Spleen (tissue), 13 donors: ENCODE measurements at regions of chr1 and their contacts with region 1.

Region 1: DNA sequence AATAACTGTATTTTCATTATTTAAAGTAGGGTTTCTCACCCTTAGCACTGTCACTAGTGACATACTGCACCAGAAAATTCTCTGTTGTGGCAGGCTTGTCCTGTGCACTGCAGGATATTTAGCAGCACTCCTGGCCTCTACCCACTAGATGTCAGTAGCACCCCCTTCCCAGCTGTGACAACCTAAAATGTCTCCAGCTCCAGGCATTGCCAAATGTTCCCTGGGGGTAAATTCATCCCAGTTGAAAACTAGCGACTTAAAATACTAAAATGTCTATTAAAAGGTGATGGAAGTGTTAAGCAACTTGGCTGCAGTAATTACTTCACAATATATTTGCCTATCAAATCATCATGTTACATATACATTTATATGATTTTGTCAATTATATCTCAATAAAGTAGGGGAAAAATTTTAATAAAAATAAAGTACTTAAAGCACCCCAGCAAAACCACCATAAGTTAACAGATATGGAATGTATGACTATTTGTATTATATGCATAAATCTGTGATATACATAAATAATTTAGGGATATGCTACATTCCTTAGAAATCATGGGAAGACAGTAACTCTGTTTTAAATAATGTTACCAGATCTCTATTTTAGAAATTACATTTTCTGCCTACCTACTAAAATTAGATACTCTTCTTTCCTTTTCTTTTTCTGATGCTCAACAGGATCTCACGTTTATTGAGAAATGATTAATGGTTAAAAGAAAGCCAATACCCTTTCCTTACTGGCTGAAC is 74.6 kb downstream of the ARID4B start:
- DNase-seq: no peak
- H3K4me3 ChIP-seq: no peak overlapping the region
- H3K27ac ChIP-seq: no peak overlapping the region
- H3K4me1 ChIP-seq: peaks cover 0 to 50% (median 21%) of the 10 kb centered on the region in 6 donors
- H3K27me3 ChIP-seq: no peaks in the 10 kb centered on the region
- CTCF ChIP-seq: peak; percentile 29 to 81 (median 71)
- POLR2A ChIP-seq: no peak

Region 2: GRCh38 chr1:235286667-235287066 is 33.3 kb after region 1 on chr1:
- intact Hi-C with region 1: no loop called
- DNase-seq: no peak
- H3K4me3 ChIP-seq: no peak overlapping the region
- H3K27ac ChIP-seq: no peak overlapping the region
- H3K4me1 ChIP-seq: peaks cover 10 to 99% (median 78%) of the 10 kb centered on the region in 6 donors
- H3K27me3 ChIP-seq: no peaks in the 10 kb centered on the region
- CTCF ChIP-seq: no peak
- POLR2A ChIP-seq: no peak

Region 3: GRCh38 chr1:235328357-235329138 is 75.2 kb after region 1 on chr1 and contains the start of gene GGPS1:
- intact Hi-C with region 1: loop called (anchors 10 kb)
- DNase-seq: peak; percentile 98
- H3K4me3 ChIP-seq: peak within 1 kb of the TSS; percentile 62 to 97 (median 90)
- H3K27ac ChIP-seq: peak within 1 kb of the TSS; percentile 91 to 100 (median 98)
- H3K4me1 ChIP-seq: peaks cover 51 to 78% (median 72%) of the 10 kb centered on the region in 6 donors
- H3K27me3 ChIP-seq: no peaks in the 10 kb centered on the region
- CTCF ChIP-seq: peak in 6 of 11 experiments; percentile 7 to 44 (median 28)
- POLR2A ChIP-seq: peak; percentile 58 to 69 (median 66)
- total RNA-seq, gene GGPS1: 23.6 to 34.9 (median 25.9) TPM

Region 4: DNA sequence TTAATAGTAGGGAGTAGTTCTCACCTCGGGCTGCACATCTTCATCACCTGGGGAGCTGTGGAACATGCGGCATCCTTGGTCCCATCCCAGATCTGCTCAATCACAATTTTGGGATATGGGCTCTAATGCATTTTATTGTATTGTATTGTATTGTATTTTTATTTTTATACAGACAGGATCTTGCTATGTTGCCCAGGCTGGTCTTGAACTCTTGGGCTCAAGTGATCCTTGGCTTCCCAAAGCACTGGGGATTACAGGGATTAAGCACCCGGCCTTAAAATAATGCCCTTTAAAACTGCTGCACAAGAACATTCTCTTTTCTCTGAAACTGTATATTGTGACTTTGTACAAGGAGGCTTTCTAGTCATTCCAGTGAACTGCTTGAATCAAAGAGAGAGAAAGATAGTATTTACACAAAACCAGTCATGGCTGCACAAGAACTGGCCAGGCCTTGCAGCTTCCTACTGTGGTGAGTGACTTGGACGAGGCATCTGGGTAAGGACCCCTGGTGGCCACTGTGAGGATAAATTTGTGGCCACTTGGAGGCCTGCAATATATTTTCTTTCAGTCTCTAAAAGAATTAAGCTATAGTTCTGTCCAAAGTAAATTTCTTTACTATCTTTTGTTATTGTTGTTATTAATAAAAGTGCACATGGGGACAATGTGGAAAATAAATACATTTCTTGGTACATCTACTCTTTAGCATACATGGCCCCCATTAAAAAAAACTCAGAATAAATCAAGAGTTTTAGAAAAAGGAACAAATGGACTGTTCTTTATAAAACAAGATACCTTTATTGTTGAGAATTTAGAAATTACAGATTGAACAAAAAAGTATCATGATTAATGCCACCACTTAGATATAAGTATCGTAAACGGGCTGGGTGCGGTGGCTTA is 161.9 kb after region 1 on chr1:
- intact Hi-C with region 1: loop called (anchors 2 kb)
- DNase-seq: peak; percentile 80
- H3K4me3 ChIP-seq: no peak overlapping the region
- H3K27ac ChIP-seq: no peak overlapping the region
- H3K4me1 ChIP-seq: peaks cover 0 to 30% (median 6%) of the 10 kb centered on the region in 6 donors
- H3K27me3 ChIP-seq: no peaks in the 10 kb centered on the region
- CTCF ChIP-seq: peak; percentile 44 to 84 (median 72)
- POLR2A ChIP-seq: no peak